ENCODE measurements at regions of chr2 and their contacts with region 1.

Region 1: GRCh38 chr2:223970343-223971128 is 13.3 kb downstream of the MRPL44 start:
- DNase-seq: peak in 24 of 35 experiments; percentile 4 to 80 (median 38)
- ATAC-seq: peak in 3 of 4 experiments; percentile 65 to 71 (median 66)
- H3K4me3 ChIP-seq: no peak overlapping the region
- H3K4me3 Mint-ChIP-seq: no peak overlapping the region
- H3K27ac ChIP-seq: no peak overlapping the region
- H3K27ac Mint-ChIP-seq: no peak overlapping the region
- H3K4me1 ChIP-seq: peaks cover 0 to 3% of the 10 kb centered on the region in 2 experiments
- H3K4me1 Mint-ChIP-seq: peaks cover 4 to 8% (median 4%) of the 10 kb centered on the region in 3 donors
- H3K27me3 ChIP-seq: no peaks in the 10 kb centered on the region
- H3K27me3 Mint-ChIP-seq: no peaks in the 10 kb centered on the region

Region 2: GRCh38 chr2:222174450-222174849 is 1796.1 kb before region 1 on chr2:
- CTCF ChIA-PET with region 1: no interaction called
- POLR2A ChIA-PET with region 1: no interaction called
- DNase-seq: no peak
- ATAC-seq: no peak
- H3K4me3 ChIP-seq: no peak overlapping the region
- H3K4me3 Mint-ChIP-seq: no peak overlapping the region
- H3K27ac ChIP-seq: no peak overlapping the region
- H3K27ac Mint-ChIP-seq: no peak overlapping the region
- H3K4me1 ChIP-seq: no peaks in the 10 kb centered on the region
- H3K4me1 Mint-ChIP-seq: no peaks in the 10 kb centered on the region
- H3K27me3 ChIP-seq: no peaks in the 10 kb centered on the region
- H3K27me3 Mint-ChIP-seq: peaks cover 6 to 8% of the 10 kb centered on the region in 2 donors

Region 3: GRCh38 chr2:223909001-223909741 is 61.4 kb before region 1 on chr2:
- CTCF ChIA-PET with region 1: no interaction called
- POLR2A ChIA-PET with region 1: no interaction called
- DNase-seq: no peak
- ATAC-seq: no peak
- H3K4me3 ChIP-seq: no peak overlapping the region
- H3K4me3 Mint-ChIP-seq: no peak overlapping the region
- H3K27ac ChIP-seq: no peak overlapping the region
- H3K27ac Mint-ChIP-seq: peak overlapping the region in 1 of 2 donors; percentile 16
- H3K4me1 ChIP-seq: no peaks in the 10 kb centered on the region
- H3K4me1 Mint-ChIP-seq: peaks cover 3 to 6% (median 6%) of the 10 kb centered on the region in 3 donors
- H3K27me3 ChIP-seq: no peaks in the 10 kb centered on the region
- H3K27me3 Mint-ChIP-seq: no peaks in the 10 kb centered on the region

Region 4: DNA sequence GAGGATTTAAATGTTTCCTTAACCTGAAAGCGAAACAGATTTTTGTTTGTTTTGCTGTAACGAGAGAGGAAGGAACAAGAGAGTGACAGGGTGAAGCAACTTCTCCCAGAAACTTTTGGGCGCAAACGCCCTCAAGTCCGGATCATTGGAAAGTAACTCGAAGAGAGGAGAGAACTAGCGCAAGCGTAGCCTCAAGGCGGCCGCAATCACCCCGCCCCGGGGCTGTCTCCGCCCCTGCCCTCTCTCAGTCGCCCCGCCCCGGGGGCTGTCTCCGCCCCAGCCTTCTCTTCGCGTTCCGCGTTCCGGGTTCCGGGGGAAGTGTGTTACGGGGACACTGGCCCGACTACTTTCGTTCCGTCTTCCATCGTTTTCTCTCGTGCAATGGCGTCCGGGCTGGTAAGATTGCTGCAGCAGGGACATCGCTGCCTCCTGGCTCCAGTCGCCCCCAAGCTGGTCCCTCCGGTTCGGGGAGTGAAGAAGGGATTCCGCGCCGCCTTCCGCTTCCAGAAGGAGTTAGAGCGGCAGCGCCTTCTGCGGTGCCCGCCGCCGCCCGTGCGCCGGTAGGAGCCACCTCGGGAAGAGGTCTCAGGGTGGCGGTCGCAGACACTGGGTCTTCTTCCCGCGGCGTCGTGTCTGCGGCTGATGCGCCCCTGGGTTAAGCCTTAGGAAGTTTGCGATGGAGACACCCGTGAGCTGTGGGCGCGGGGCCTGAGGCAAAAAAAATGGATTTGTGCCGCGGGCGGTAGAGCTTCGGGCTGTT is 13.3 kb before region 1 on chr2 and contains the start of gene MRPL44:
- CTCF ChIA-PET with region 1: interaction called, 18 to 20 read pairs
- POLR2A ChIA-PET with region 1: interaction called in 1 of 2 experiments, 4 read pairs
- DNase-seq: peak; percentile 86 to 98 (median 95)
- ATAC-seq: peak; percentile 100
- H3K4me3 ChIP-seq: peak within 1 kb of the TSS; percentile 91 to 94
- H3K4me3 Mint-ChIP-seq: peak within 1 kb of the TSS; percentile 93 to 99 (median 95)
- H3K27ac ChIP-seq: peak within 1 kb of the TSS; percentile 63
- H3K27ac Mint-ChIP-seq: peak within 1 kb of the TSS; percentile 93 to 95
- H3K4me1 ChIP-seq: peaks cover 23 to 47% of the 10 kb centered on the region in 2 experiments
- H3K4me1 Mint-ChIP-seq: peaks cover 56 to 62% (median 59%) of the 10 kb centered on the region in 3 donors
- H3K27me3 ChIP-seq: no peaks in the 10 kb centered on the region
- H3K27me3 Mint-ChIP-seq: no peaks in the 10 kb centered on the region
- total RNA-seq, gene MRPL44: 22.4 to 25.3 (median 23.8) TPM

Region 5: DNA sequence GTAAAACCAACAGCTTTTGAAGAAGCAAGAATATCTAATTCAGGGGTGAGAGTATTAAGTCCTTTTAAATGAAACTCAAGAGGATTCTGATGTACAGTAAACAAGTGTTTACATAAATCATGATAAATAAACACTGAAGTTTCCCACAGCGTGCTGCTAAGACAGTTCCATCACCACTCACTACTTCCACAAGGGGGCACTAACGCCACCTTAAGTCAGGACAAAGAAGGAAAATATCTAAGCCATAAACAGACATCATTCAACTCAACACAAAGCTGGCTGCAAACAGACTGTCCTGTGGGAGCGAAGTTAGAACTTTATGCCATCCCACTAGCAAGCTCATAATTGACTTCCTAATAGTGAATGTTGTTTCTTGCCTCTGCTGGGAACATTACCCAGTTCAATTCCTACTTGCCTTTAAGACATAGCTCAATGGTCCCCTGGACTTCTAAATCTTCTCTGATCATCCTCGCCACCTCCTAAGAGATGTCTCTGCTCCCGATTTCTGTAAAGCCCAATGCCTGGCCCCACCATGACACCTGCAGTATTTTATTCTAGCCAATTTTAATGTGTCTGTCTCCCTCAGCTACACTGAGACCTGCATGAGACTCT is 23.2 kb after region 1 on chr2:
- CTCF ChIA-PET with region 1: interaction called, 36 to 58 read pairs
- POLR2A ChIA-PET with region 1: interaction called in 1 of 2 experiments, 3 read pairs
- DNase-seq: peak; percentile 6 to 81 (median 46)
- ATAC-seq: peak in 3 of 4 experiments; percentile 51 to 71 (median 70)
- H3K4me3 ChIP-seq: no peak overlapping the region
- H3K4me3 Mint-ChIP-seq: no peak overlapping the region
- H3K27ac ChIP-seq: no peak overlapping the region
- H3K27ac Mint-ChIP-seq: no peak overlapping the region
- H3K4me1 ChIP-seq: no peaks in the 10 kb centered on the region
- H3K4me1 Mint-ChIP-seq: no peaks in the 10 kb centered on the region
- H3K27me3 ChIP-seq: peaks cover 0 to 2% of the 10 kb centered on the region in 2 experiments
- H3K27me3 Mint-ChIP-seq: no peaks in the 10 kb centered on the region

Region 6: GRCh38 chr2:224242543-224242942 is 272.0 kb after region 1 on chr2:
- CTCF ChIA-PET with region 1: no interaction called
- POLR2A ChIA-PET with region 1: no interaction called
- DNase-seq: no peak
- ATAC-seq: no peak
- H3K4me3 ChIP-seq: no peak overlapping the region
- H3K4me3 Mint-ChIP-seq: no peak overlapping the region
- H3K27ac ChIP-seq: no peak overlapping the region
- H3K27ac Mint-ChIP-seq: no peak overlapping the region
- H3K4me1 ChIP-seq: no peaks in the 10 kb centered on the region
- H3K4me1 Mint-ChIP-seq: no peaks in the 10 kb centered on the region
- H3K27me3 ChIP-seq: no peaks in the 10 kb centered on the region
- H3K27me3 Mint-ChIP-seq: peaks cover 12 to 14% of the 10 kb centered on the region in 2 donors

Region 7: DNA sequence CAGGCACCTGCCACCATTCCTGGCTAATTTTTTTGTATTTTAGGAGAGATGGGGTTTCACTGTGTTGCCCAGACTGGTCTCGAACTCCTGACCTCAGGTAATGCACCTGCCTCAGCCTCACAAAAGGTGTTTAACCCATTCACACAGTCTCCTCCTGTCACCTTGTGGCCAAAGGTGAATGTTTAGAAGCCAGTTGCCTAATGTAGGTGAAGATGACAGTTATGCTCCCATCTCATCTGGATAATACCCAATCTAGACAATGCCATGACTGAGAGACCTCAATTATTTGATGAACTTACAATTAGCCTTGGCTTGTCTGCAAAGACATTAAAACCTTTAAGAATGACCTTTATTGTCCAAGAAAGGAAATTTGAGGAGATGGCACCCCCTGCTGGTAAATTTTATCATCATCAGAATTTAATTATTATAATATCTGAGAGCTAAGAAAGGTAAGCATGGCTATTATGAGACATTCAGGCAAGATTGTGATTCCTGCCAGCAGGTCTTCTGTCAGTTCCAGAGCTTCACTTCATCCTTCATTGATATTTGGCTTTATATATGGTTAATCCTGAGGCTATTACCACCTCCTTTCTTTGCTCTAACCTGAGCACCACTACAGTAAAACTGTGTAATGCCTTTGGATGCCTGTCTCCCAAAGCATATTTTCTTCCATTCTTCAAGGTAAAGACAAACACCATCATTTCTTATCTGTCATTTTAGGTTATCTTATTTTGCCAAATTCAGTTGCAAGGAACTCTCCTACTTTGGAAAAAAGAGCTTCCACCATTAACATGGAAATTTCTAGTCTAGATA is 313.8 kb after region 1 on chr2:
- CTCF ChIA-PET with region 1: interaction called, 37 to 83 read pairs
- POLR2A ChIA-PET with region 1: no interaction called
- DNase-seq: peak in 5 of 35 experiments; percentile 10 to 57 (median 14)
- ATAC-seq: no peak
- H3K4me3 ChIP-seq: no peak overlapping the region
- H3K4me3 Mint-ChIP-seq: no peak overlapping the region
- H3K27ac ChIP-seq: no peak overlapping the region
- H3K27ac Mint-ChIP-seq: no peak overlapping the region
- H3K4me1 ChIP-seq: no peaks in the 10 kb centered on the region
- H3K4me1 Mint-ChIP-seq: no peaks in the 10 kb centered on the region
- H3K27me3 ChIP-seq: peaks cover 0 to 13% of the 10 kb centered on the region in 2 experiments
- H3K27me3 Mint-ChIP-seq: peaks cover 23 to 40% of the 10 kb centered on the region in 2 donors

Region 8: GRCh38 chr2:224369028-224369632 is 398.6 kb after region 1 on chr2:
- CTCF ChIA-PET with region 1: interaction called, 4 to 12 read pairs
- POLR2A ChIA-PET with region 1: no interaction called
- DNase-seq: peak in 2 of 35 experiments; percentile 6 to 62
- ATAC-seq: peak in 1 of 4 experiments; percentile 54
- H3K4me3 ChIP-seq: no peak overlapping the region
- H3K4me3 Mint-ChIP-seq: no peak overlapping the region
- H3K27ac ChIP-seq: no peak overlapping the region
- H3K27ac Mint-ChIP-seq: no peak overlapping the region
- H3K4me1 ChIP-seq: no peaks in the 10 kb centered on the region
- H3K4me1 Mint-ChIP-seq: no peaks in the 10 kb centered on the region
- H3K27me3 ChIP-seq: peaks cover 0 to 6% of the 10 kb centered on the region in 2 experiments
- H3K27me3 Mint-ChIP-seq: peaks cover 1 to 5% of the 10 kb centered on the region in 2 donors